Tibial artery (tissue), 4 donors: ENCODE measurements at regions of chr12 and their contacts with region 1.

Region 1: GRCh38 chr12:101670007-101670687 is 27.3 kb upstream of the CHPT1 start:
- DNase-seq: peak in 1 of 2 donors; percentile 41
- H3K4me3 ChIP-seq: no peak overlapping the region
- H3K27ac ChIP-seq: no peak overlapping the region
- H3K4me1 ChIP-seq: peaks cover 0 to 5% (median 0%) of the 10 kb centered on the region in 4 donors
- H3K27me3 ChIP-seq: peaks cover 0 to 9% of the 10 kb centered on the region in 2 donors
- CTCF ChIP-seq: peak; percentile 54 to 60

Region 2: GRCh38 chr12:101759396-101760047 is 89.4 kb after region 1 on chr12:
- intact Hi-C with region 1: loop called (anchors 10 kb)
- DNase-seq: no peak
- H3K4me3 ChIP-seq: no peak overlapping the region
- H3K27ac ChIP-seq: no peak overlapping the region
- H3K4me1 ChIP-seq: peaks cover 0 to 5% (median 3%) of the 10 kb centered on the region in 4 donors
- H3K27me3 ChIP-seq: no peaks in the 10 kb centered on the region
- CTCF ChIP-seq: peak; percentile 65 to 69